CD4-positive, alpha-beta T cell (primary cell): ENCODE measurements at regions of chr11 and their contacts with region 1.

Region 1: DNA sequence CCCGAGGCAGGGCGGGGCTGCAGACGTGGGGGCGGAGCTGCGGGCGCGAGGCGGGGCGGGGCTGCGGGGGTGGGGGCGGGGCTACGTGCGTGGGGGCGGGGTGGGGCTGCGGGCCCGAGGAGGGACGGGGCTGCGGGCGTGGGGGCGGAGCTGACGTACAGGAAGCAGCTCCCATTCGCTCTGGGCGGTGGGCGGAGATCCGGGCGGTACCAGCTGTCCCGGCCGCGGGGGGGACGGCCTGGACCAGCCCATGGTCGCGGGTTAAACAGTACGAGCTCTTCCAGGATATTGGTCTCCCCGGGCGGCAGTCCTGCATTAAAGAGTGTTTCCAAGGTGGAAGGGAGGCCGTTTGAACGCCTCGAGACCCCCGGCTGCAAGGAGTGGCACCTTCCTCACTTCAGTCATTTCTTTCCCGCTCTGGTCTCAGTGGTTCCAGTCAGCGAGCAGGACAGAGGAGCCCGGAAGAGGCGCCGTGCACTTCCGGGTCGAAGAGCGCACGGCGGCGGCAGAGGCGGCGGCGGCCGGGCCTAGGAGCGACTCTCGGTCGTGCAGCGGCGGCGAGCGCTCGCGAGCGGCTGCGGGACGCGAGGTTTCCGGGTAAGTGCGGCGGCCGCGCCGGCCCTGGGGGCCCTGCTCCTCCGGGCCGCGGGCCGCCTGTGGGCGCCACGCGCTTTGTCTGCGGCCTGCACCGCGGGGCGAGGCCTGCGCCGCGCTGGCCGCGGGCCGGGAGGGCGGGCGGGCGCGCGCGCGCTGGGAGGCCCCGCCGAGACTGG is at the start of gene PHRF1:
- DNase-seq: peak; percentile 91 to 98 (median 96)
- ATAC-seq: peak; percentile 90
- H3K4me3 ChIP-seq: peak within 1 kb of the TSS; percentile 87
- H3K4me3 Mint-ChIP-seq: peak within 1 kb of the TSS; percentile 95
- H3K27ac ChIP-seq: peak within 1 kb of the TSS; percentile 87 to 98
- H3K27ac Mint-ChIP-seq: peak within 1 kb of the TSS; percentile 92
- H3K4me1 ChIP-seq: peaks cover 56% of the 10 kb centered on the region
- H3K4me1 Mint-ChIP-seq: peaks cover 48% of the 10 kb centered on the region
- H3K27me3 ChIP-seq: no peaks in the 10 kb centered on the region
- H3K27me3 Mint-ChIP-seq: peaks cover 4% of the 10 kb centered on the region
- CTCF ChIP-seq: no peak
- total RNA-seq, gene PHRF1: 37.1 to 37.6 TPM

Region 2: GRCh38 chr11:406978-407739 is 169.0 kb before region 1 on chr11:
- CTCF ChIA-PET with region 1: no interaction called
- POLR2A ChIA-PET with region 1: interaction called, 4 read pairs
- intact Hi-C with region 1: loop called in 1 of 2 experiments (anchors 5 kb)
- DNase-seq: peak; percentile 84 to 97 (median 91)
- ATAC-seq: peak; percentile 84
- H3K4me3 ChIP-seq: peak overlapping the region; percentile 39
- H3K4me3 Mint-ChIP-seq: no peak overlapping the region
- H3K27ac ChIP-seq: peak overlapping the region; percentile 64 to 67
- H3K27ac Mint-ChIP-seq: peak overlapping the region; percentile 76
- H3K4me1 ChIP-seq: peaks cover 46% of the 10 kb centered on the region
- H3K4me1 Mint-ChIP-seq: peaks cover 8% of the 10 kb centered on the region
- H3K27me3 ChIP-seq: no peaks in the 10 kb centered on the region
- H3K27me3 Mint-ChIP-seq: no peaks in the 10 kb centered on the region
- CTCF ChIP-seq: no peak

Region 3: DNA sequence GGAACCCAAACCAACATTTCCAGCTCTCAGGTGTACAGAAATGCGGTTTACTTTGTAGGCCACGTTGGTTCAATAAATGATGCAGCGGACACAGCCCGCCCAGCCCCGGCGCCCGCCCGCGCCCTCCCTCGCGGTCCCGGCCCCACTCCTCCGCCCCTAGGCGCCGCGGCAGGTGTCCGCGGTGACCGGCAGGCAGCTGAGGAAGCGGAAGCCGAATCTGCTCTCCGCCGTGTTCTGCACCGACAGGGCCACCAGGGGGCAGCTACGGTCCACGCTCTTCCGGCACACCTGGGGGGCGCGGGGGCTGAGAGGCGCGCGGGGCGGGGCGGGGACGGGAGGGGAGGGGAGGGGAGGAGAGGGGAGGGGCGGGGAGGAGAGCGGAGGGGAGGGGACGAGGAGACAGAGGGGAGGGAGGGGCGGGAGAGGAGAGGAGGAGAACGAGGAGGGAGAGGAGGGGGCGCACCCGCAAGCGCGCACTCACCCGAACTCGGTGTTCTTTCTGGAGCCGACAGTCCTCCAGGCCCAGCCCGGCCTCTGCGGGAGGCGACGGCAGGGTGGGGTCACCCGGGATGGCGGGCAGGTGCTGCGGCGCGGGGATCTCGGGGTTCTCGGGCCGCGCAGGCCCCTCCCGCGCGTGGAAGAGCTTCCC is 21.2 kb before region 1 on chr11:
- CTCF ChIA-PET with region 1: interaction called, 5 read pairs
- POLR2A ChIA-PET with region 1: interaction called, 21 read pairs
- intact Hi-C with region 1: loop called in 1 of 2 experiments (anchors 2 kb)
- DNase-seq: peak; percentile 57 to 92 (median 77)
- ATAC-seq: peak; percentile 80
- H3K4me3 ChIP-seq: peak overlapping the region; percentile 48
- H3K4me3 Mint-ChIP-seq: peak overlapping the region; percentile 34
- H3K27ac ChIP-seq: no peak overlapping the region
- H3K27ac Mint-ChIP-seq: no peak overlapping the region
- H3K4me1 ChIP-seq: peaks cover 34% of the 10 kb centered on the region
- H3K4me1 Mint-ChIP-seq: peaks cover 4% of the 10 kb centered on the region
- H3K27me3 ChIP-seq: no peaks in the 10 kb centered on the region
- H3K27me3 Mint-ChIP-seq: no peaks in the 10 kb centered on the region
- CTCF ChIP-seq: peak; percentile 53

Region 4: GRCh38 chr11:587978-588380 is 11.8 kb after region 1 on chr11:
- CTCF ChIA-PET with region 1: no interaction called
- POLR2A ChIA-PET with region 1: interaction called, 17 read pairs
- intact Hi-C with region 1: no loop called
- DNase-seq: peak; percentile 40 to 89 (median 71)
- ATAC-seq: peak; percentile 91
- H3K4me3 ChIP-seq: no peak overlapping the region
- H3K4me3 Mint-ChIP-seq: peak overlapping the region; percentile 56
- H3K27ac ChIP-seq: peak overlapping the region; percentile 51 to 77
- H3K27ac Mint-ChIP-seq: peak overlapping the region; percentile 96
- H3K4me1 ChIP-seq: peaks cover 20% of the 10 kb centered on the region
- H3K4me1 Mint-ChIP-seq: peaks cover 22% of the 10 kb centered on the region
- H3K27me3 ChIP-seq: no peaks in the 10 kb centered on the region
- H3K27me3 Mint-ChIP-seq: no peaks in the 10 kb centered on the region
- CTCF ChIP-seq: no peak

Region 5: DNA sequence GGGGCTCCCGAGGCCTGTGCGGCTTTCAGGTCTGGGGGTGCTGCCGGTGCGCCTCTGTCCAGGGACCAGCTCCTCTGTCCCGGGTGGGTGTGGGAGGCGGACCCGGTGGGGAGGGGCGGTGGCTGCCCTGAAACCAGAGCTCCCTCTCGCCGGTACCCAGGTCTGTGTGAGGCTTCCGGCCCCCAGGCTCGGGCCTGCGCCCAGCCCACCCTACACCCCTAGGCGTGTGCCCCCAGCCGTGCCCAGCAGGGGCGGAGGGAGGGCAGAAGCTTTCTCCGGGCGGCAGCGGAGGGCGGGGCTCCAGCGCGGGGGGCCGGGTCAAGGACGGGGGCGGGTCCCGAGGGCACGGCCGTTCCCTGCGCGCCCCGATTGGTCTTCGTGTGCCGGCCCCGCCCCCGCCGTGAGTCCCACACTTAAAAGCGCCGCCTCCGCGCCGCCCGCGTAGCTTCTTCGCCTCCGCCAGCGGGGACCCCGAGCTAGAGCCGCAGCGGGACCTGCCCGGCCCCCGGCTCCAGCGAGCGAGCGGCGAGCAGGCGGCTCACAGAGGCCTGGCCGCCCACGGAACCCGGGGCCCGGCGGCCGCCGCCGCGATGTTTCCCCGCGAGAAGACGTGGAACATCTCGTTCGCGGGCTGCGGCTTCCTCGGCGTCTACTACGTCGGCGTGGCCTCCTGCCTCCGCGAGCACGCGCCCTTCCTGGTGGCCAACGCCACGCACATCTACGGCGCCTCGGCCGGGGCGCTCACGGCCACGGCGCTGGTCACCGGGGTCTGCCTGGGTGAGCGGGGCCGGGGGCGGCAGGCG is 243.1 kb after region 1 on chr11:
- CTCF ChIA-PET with region 1: no interaction called
- POLR2A ChIA-PET with region 1: interaction called, 10 read pairs
- intact Hi-C with region 1: no loop called
- DNase-seq: peak; percentile 83 to 96 (median 92)
- ATAC-seq: peak; percentile 71
- H3K4me3 ChIP-seq: peak overlapping the region; percentile 74
- H3K4me3 Mint-ChIP-seq: peak overlapping the region; percentile 97
- H3K27ac ChIP-seq: peak overlapping the region; percentile 62 to 88
- H3K27ac Mint-ChIP-seq: peak overlapping the region; percentile 92
- H3K4me1 ChIP-seq: peaks cover 34% of the 10 kb centered on the region
- H3K4me1 Mint-ChIP-seq: peaks cover 11% of the 10 kb centered on the region
- H3K27me3 ChIP-seq: no peaks in the 10 kb centered on the region
- H3K27me3 Mint-ChIP-seq: no peaks in the 10 kb centered on the region
- CTCF ChIP-seq: peak; percentile 21

Region 6: DNA sequence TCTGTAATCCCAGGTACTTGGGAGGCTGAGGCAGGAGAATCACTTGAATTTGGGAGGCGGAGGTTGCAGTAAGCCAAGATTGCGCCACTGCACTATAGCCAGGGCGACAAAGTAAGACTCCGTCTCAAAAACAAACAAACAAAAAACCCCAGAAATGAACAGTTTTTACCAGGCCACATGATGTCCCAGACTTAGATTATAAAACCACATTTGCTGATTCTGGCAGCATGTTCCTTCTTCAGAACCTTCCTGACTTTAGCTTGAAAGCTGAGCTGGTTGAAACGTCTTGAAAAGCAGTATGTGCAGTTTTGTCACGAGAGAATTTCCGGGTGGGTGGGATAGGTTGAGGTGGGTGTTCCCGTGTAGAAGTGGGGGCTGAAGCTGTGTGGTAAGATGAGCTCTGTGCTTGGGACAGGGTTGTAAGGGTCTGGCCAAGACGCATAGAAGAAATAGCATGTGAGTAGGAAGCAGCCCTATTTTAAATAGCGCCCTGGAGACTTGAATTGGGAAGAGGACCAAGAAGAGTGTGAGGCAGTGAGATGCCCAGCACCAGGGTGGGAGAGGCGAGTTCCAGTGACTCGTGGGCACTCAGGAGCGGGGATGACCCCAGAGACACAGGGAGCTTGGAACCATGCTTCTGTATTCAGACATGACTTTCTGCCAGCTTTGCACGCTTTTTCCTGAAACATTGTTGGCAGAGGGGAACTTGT is 357.1 kb after region 1 on chr11:
- CTCF ChIA-PET with region 1: no interaction called
- POLR2A ChIA-PET with region 1: no interaction called
- intact Hi-C with region 1: no loop called
- DNase-seq: no peak
- ATAC-seq: no peak
- H3K4me3 ChIP-seq: no peak overlapping the region
- H3K4me3 Mint-ChIP-seq: peak overlapping the region; percentile 43
- H3K27ac ChIP-seq: no peak overlapping the region
- H3K27ac Mint-ChIP-seq: peak overlapping the region; percentile 2
- H3K4me1 ChIP-seq: peaks cover 63% of the 10 kb centered on the region
- H3K4me1 Mint-ChIP-seq: peaks cover 68% of the 10 kb centered on the region
- H3K27me3 ChIP-seq: no peaks in the 10 kb centered on the region
- H3K27me3 Mint-ChIP-seq: no peaks in the 10 kb centered on the region
- CTCF ChIP-seq: no peak